ENCODE measurements at regions of chr5 and their contacts with region 1.

Region 1: GRCh38 chr5:152532714-152533113 is 127.6 kb upstream of the NMUR2 start:
- DNase-seq: peak in 1 of 2 experiments; percentile 37
- H3K4me3 ChIP-seq: no peak overlapping the region
- H3K27ac ChIP-seq: no peak overlapping the region
- H3K4me1 ChIP-seq: no peaks in the 10 kb centered on the region
- H3K27me3 ChIP-seq: peaks cover 16% of the 10 kb centered on the region
- CTCF ChIP-seq: peak; percentile 72

Region 2: GRCh38 chr5:152412129-152412528 is 120.6 kb before region 1 on chr5:
- CTCF ChIA-PET with region 1: no interaction called
- POLR2A ChIA-PET with region 1: no interaction called
- intact Hi-C with region 1: no loop called
- DNase-seq: no peak
- H3K4me3 ChIP-seq: no peak overlapping the region
- H3K27ac ChIP-seq: no peak overlapping the region
- H3K4me1 ChIP-seq: no peaks in the 10 kb centered on the region
- H3K27me3 ChIP-seq: no peaks in the 10 kb centered on the region
- CTCF ChIP-seq: no peak

Region 3: DNA sequence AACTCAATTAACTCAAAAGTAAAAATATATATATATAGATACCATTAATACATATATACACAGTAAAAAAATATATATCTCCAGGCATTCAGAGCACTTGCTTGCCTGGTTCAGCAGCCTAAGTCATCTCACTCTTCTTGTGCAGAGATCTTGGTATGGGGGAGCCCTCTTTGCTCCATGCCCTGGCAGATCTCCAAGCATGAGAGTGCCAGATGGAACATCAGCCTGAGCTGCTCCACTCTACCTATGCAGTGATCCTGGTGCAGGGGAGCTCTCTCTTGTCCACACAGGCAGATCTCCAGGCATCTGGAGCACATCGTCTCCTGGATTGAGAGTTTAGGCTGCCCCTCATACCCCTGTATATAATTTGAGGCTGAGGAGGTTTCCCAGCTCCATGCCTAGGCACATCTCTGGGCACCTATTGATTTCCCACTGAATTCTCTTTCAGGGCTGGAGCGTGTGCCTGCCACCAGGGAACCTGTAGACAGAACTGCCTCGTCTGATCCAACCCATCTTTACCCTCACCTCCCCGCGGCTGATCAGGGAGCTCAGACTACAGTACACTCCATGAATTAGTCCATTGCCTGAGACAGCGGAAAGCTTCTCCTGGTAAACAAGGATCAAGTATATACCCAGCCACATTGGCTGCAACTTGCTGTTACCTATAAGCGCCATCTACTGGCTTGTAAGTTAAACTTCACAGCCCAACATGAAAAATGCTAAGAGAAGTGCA is 615.3 kb after region 1 on chr5:
- CTCF ChIA-PET with region 1: no interaction called
- POLR2A ChIA-PET with region 1: no interaction called
- intact Hi-C with region 1: loop called (anchors 10 kb)
- DNase-seq: peak; percentile 1 to 41
- H3K4me3 ChIP-seq: no peak overlapping the region
- H3K27ac ChIP-seq: no peak overlapping the region
- H3K4me1 ChIP-seq: no peaks in the 10 kb centered on the region
- H3K27me3 ChIP-seq: no peaks in the 10 kb centered on the region
- CTCF ChIP-seq: peak; percentile 71

Region 4: GRCh38 chr5:153964880-153965645 is 1432.3 kb after region 1 on chr5:
- CTCF ChIA-PET with region 1: interaction called, 9 read pairs
- POLR2A ChIA-PET with region 1: no interaction called
- intact Hi-C with region 1: loop called (anchors 1 kb)
- DNase-seq: peak in 1 of 2 experiments; percentile 51
- H3K4me3 ChIP-seq: no peak overlapping the region
- H3K27ac ChIP-seq: no peak overlapping the region
- H3K4me1 ChIP-seq: no peaks in the 10 kb centered on the region
- H3K27me3 ChIP-seq: peaks cover 31% of the 10 kb centered on the region
- CTCF ChIP-seq: peak; percentile 95